Pancreas (tissue), 10 donors: ENCODE measurements at regions of chr18 and their contacts with region 1.

Region 1: GRCh38 chr18:51290860-51291259 is 93.4 kb upstream of the MEX3C start:
- DNase-seq: no peak
- ATAC-seq: no peak
- H3K4me3 ChIP-seq: no peak overlapping the region
- H3K27ac ChIP-seq: no peak overlapping the region
- H3K4me1 ChIP-seq: no peaks in the 10 kb centered on the region
- H3K27me3 ChIP-seq: no peaks in the 10 kb centered on the region
- CTCF ChIP-seq: no peak

Region 2: GRCh38 chr18:50469380-50469781 is 821.5 kb before region 1 on chr18:
- intact Hi-C with region 1: no loop called
- DNase-seq: no peak
- ATAC-seq: peak in 1 of 4 donors; percentile 40
- H3K4me3 ChIP-seq: no peak overlapping the region
- H3K27ac ChIP-seq: no peak overlapping the region
- H3K4me1 ChIP-seq: no peaks in the 10 kb centered on the region
- H3K27me3 ChIP-seq: no peaks in the 10 kb centered on the region
- CTCF ChIP-seq: no peak

Region 3: DNA sequence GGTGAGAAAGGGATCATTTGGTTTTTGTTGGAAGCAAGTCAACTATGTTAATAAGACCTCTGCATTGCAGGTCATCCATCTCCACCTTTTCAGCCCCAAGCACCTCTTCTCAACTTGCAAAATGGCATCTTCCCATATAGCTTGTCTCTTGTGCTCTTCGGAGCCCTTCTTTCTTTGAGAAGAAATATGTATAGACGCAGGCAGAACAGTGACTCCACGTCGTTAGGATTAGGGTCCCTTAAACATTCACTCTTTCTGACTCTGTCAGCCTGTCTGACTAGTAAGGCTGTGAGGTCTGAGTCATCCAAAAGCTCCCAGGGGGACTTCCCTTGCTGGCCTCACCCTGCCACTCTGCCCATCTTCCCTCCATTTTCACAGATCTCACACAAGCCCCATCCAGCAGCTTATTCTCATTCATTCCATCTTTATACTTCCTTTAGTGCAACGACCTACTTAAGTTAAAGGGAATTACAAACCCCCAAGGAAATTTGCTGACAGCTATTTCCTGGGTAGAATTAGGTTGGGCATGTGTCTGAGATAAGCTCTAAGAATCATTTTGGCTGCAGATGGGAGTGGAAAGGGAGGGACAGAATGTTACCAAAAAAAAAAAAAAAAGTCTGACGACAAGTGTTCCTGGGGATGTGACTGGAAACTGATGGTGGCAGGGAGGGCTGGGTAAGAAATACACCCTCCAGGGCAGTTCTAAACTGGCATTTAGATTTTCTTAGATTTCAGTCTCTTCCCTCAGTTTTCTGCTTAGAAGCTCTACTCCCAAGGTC is 55.7 kb before region 1 on chr18:
- intact Hi-C with region 1: loop called in 1 of 3 experiments (anchors 10 kb)
- DNase-seq: no peak
- ATAC-seq: no peak
- H3K4me3 ChIP-seq: no peak overlapping the region
- H3K27ac ChIP-seq: no peak overlapping the region
- H3K4me1 ChIP-seq: no peaks in the 10 kb centered on the region
- H3K27me3 ChIP-seq: no peaks in the 10 kb centered on the region
- CTCF ChIP-seq: no peak

Region 4: GRCh38 chr18:51417643-51418483 is 127.0 kb after region 1 on chr18:
- intact Hi-C with region 1: no loop called
- DNase-seq: no peak
- ATAC-seq: no peak
- H3K4me3 ChIP-seq: no peak overlapping the region
- H3K27ac ChIP-seq: no peak overlapping the region
- H3K4me1 ChIP-seq: no peaks in the 10 kb centered on the region
- H3K27me3 ChIP-seq: no peaks in the 10 kb centered on the region
- CTCF ChIP-seq: no peak

Region 5: GRCh38 chr18:51537487-51537886 is 246.6 kb after region 1 on chr18:
- intact Hi-C with region 1: loop called in 1 of 3 experiments (anchors 10 kb)
- DNase-seq: peak in 5 of 6 donors; percentile 48 to 56 (median 49)
- ATAC-seq: peak; percentile 92 to 98 (median 96)
- H3K4me3 ChIP-seq: no peak overlapping the region
- H3K27ac ChIP-seq: no peak overlapping the region
- H3K4me1 ChIP-seq: no peaks in the 10 kb centered on the region
- H3K27me3 ChIP-seq: no peaks in the 10 kb centered on the region
- CTCF ChIP-seq: no peak